Adrenal gland (tissue), 19 donors: ENCODE measurements at regions of chr12 and their contacts with region 1.

Region 1: GRCh38 chr12:55073043-55074022 is 52.9 kb upstream of the OR9K2 start:
- DNase-seq: peak; percentile 54 to 90 (median 78)
- H3K4me3 ChIP-seq: no peak overlapping the region
- H3K27ac ChIP-seq: no peak overlapping the region
- H3K4me1 ChIP-seq: no peaks in the 10 kb centered on the region
- H3K27me3 ChIP-seq: peaks cover 19% of the 10 kb centered on the region
- CTCF ChIP-seq: peak; percentile 73 to 94 (median 83)
- POLR2A ChIP-seq: no peak

Region 2: DNA sequence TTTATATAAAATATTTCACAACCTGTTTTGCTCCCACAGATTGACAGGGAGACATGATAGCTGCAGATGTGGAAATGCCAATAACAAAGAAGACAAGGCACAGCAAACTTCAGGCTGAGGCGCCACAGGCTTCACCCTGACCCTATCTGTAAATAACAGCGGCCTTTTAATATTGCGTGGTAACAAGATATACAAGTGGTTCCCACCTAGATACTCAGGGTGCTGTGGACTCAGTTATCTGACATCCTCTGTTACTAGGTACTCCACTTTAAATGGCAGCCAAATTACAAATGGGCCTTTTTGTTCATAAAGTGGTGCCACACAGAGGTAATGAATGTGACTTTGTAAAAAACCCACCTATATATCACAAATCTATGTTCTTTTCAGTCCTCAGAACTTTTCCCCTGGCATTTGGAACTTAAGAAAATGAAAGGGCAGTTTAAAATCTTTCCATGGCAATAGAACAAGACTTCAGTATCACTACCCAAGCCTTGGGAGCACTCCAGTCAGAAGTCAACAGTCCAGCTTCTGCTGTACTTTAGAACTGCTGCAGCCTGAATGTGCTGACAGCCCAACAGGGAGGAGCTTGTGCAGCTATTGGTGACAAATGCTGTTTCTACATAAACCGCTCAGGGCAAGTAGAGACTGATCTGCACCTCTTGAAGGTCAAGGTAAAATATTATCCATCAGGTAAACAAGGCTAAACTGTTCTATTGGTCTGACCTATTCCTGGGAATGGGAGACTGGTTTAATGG is 339.0 kb before region 1 on chr12:
- intact Hi-C with region 1: no loop called
- DNase-seq: no peak
- H3K4me3 ChIP-seq: no peak overlapping the region
- H3K27ac ChIP-seq: no peak overlapping the region
- H3K4me1 ChIP-seq: no peaks in the 10 kb centered on the region
- H3K27me3 ChIP-seq: no peaks in the 10 kb centered on the region
- CTCF ChIP-seq: no peak
- POLR2A ChIP-seq: no peak

Region 3: DNA sequence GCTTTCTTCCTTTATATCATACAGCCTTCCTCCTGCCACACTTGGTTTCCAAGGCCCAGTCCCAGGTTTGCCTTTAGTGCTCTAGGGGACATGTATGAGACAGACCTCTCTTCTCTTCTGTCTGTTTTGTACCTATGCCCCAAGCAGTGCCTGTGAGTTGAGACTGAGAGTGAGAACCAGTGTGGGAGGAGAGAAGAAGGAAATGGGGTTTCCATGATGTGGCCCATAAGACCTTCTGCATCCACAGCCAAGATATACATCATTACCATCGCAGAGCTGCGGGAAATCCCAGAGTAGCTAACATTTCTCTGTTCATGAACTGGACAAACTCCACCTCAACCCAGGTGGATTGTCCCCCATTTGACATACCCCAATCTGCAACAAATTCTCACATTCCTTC is 91.5 kb before region 1 on chr12:
- intact Hi-C with region 1: no loop called
- DNase-seq: no peak
- H3K4me3 ChIP-seq: no peak overlapping the region
- H3K27ac ChIP-seq: no peak overlapping the region
- H3K4me1 ChIP-seq: no peaks in the 10 kb centered on the region
- H3K27me3 ChIP-seq: no peaks in the 10 kb centered on the region
- CTCF ChIP-seq: no peak
- POLR2A ChIP-seq: no peak

Region 4: DNA sequence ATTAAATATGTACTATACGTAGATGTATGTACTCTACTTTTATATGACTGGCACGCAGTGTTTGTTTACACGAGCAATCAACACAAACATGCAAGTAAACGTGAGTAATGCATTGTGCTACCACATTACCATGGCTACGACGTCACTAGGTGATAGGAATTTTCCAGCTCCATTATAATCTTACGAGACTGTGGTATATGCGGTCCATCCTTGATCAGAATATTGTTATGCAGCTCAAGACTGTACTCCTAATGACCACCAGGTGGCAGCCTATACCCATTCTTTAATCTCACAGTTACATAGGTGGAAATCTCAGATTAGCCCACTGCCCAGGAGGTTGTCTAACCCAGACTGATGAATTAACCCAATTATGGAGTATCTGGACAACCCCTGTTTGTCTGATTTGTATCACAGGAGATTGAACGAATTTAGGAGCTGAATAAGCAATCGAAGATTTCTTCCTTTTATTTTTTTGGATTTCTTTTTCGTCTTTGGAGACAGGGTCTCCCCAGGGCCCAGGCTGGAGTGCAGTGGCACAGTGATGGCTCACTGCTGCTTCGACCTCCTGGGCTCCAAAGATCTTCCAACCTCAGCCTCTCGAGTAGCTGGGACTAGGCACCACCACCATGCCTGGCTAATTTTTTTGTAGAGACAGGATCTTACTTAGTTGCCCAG is 80.0 kb before region 1 on chr12:
- intact Hi-C with region 1: loop called (anchors 2 to 5 kb)
- DNase-seq: peak; percentile 22 to 83 (median 37)
- H3K4me3 ChIP-seq: no peak overlapping the region
- H3K27ac ChIP-seq: no peak overlapping the region
- H3K4me1 ChIP-seq: no peaks in the 10 kb centered on the region
- H3K27me3 ChIP-seq: no peaks in the 10 kb centered on the region
- CTCF ChIP-seq: peak; percentile 85 to 96 (median 90)
- POLR2A ChIP-seq: peak in 1 of 2 donors; percentile 34